Activated CD4-positive, alpha-beta memory T cell treated with anti-CD3 and anti-CD28 coated beads for 36 hours (primary cell): ENCODE measurements at regions of chr1 and their contacts with region 1.

Region 1: GRCh38 chr1:226626577-226626956 is 78.0 kb downstream of the STUM start:
- DNase-seq: peak; percentile 92
- H3K4me3 Mint-ChIP-seq: peak overlapping the region; percentile 38
- H3K27ac Mint-ChIP-seq: peak overlapping the region; percentile 76
- H3K4me1 Mint-ChIP-seq: peaks cover 25% of the 10 kb centered on the region
- H3K27me3 Mint-ChIP-seq: peaks cover 1% of the 10 kb centered on the region

Region 2: DNA sequence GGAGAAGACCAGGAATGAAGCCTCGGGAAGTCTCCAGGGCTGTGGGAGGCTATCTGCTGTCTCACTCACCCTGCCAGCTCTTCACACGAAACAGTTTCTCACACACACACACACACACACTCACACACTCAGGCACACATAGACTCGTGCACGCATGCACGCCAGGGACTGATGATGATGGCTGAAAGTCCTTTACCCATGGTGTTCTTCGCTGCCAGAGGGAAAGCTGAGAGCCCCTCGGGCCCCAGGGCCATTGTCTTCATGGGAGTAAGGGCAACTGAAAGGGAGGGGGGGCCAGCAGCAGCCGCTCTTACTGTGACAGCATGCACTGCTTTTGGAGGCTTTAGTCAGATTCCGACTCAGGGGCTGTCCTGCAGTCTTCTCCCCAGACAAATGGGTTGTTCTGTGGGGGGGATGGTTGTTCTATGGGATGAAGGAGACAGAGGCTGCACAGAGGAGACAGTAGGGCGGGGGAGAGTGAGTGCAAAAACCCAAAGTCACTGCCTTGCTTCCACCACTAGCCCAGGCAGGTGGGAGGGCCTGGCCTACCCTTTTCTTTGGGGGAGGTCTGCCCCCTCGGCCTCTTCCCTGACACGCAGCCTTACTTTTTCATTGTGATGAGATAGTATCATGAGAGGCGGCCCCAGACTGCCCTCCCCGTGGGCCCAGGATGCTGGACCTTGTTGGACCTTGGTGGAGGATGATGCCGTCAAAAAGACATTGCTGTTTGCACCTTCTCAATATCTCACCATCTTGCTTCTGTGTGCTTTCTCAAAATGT is 49.0 kb before region 1 on chr1:
- CTCF ChIA-PET with region 1: no interaction called
- POLR2A ChIA-PET with region 1: no interaction called
- intact Hi-C with region 1: no loop called
- DNase-seq: no peak
- H3K4me3 Mint-ChIP-seq: no peak overlapping the region
- H3K27ac Mint-ChIP-seq: no peak overlapping the region
- H3K4me1 Mint-ChIP-seq: no peaks in the 10 kb centered on the region
- H3K27me3 Mint-ChIP-seq: no peaks in the 10 kb centered on the region

Region 3: DNA sequence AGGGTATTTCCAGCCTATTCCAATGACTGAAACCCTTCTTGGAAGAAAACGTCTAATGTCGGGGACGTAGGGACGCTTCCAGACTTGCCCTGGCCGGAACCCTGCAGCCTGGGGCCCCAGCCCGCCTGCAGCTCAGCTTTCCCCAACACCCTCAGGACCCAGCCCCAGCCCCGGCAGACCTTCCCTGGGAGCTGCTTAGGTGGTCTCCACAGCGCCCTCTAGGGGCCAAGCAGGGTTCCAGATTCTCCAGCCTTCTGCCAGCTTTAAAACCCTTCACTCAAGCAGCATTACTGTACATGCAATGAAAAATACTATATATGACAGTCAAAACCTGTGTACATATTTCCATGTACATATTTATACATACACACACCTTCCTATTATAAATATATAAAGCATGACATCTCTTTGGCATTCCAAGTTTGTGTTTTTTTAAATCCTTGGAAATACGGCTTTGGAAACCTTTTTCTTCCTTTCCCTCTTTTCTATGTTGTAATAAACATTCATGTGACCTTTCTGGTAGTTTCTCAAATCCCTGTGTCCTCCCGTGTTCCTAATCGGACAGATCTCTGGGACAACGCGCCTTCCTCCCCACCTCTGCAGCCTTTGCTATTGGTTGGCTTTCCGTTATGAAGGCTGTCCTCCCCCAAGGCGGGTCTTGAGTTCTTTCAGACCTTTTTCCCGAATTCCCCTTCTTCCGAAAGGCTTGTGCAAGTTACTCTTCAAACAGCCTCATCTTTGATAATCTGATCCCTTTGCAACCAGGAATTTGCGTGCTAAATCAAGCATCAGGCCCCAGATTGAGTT is 17.7 kb before region 1 on chr1:
- CTCF ChIA-PET with region 1: interaction called, 13 read pairs
- POLR2A ChIA-PET with region 1: no interaction called
- intact Hi-C with region 1: no loop called
- DNase-seq: peak; percentile 78
- H3K4me3 Mint-ChIP-seq: no peak overlapping the region
- H3K27ac Mint-ChIP-seq: no peak overlapping the region
- H3K4me1 Mint-ChIP-seq: no peaks in the 10 kb centered on the region
- H3K27me3 Mint-ChIP-seq: no peaks in the 10 kb centered on the region

Region 4: DNA sequence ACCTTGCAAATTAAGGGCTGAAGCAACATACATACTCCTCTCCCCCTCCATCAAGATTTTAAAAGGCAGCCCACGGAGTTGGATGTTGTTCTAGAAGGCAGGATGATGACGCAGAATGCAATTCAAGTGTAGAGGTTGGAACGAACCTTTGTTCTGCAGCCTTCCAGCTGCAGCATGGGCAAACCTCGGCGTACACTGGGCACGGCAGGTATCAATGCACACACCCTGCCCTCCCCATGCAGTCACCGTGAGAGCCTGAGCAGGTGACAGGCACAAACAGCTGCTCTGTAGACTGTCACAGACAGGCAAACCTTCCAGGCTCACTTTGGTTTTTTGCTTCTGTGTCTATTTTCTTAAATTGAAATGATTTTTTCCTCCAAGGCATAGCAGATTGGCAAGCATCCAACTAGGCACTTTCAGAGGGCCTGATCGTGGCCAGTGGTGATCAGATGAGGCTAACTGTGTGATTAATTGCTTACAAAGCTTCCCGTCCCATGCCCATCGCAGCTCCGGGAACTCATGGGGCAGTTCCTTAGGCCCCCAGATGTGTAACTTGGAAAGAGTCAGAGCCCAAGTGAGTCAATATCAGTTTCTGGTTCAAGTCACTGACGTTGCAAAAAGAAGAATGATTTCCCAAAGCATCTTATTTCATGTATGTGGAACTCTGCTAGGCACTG is 30.2 kb after region 1 on chr1:
- CTCF ChIA-PET with region 1: interaction called, 13 read pairs
- POLR2A ChIA-PET with region 1: no interaction called
- intact Hi-C with region 1: no loop called
- DNase-seq: no peak
- H3K4me3 Mint-ChIP-seq: peak overlapping the region; percentile 43
- H3K27ac Mint-ChIP-seq: no peak overlapping the region
- H3K4me1 Mint-ChIP-seq: peaks cover 29% of the 10 kb centered on the region
- H3K27me3 Mint-ChIP-seq: no peaks in the 10 kb centered on the region

Region 5: GRCh38 chr1:226827968-226828513 is 201.5 kb after region 1 on chr1:
- CTCF ChIA-PET with region 1: interaction called, 73 read pairs
- POLR2A ChIA-PET with region 1: interaction called, 3 read pairs
- intact Hi-C with region 1: loop called (anchors 1 kb)
- DNase-seq: peak; percentile 98
- H3K4me3 Mint-ChIP-seq: peak overlapping the region; percentile 52
- H3K27ac Mint-ChIP-seq: peak overlapping the region; percentile 88
- H3K4me1 Mint-ChIP-seq: peaks cover 28% of the 10 kb centered on the region
- H3K27me3 Mint-ChIP-seq: no peaks in the 10 kb centered on the region

Region 6: DNA sequence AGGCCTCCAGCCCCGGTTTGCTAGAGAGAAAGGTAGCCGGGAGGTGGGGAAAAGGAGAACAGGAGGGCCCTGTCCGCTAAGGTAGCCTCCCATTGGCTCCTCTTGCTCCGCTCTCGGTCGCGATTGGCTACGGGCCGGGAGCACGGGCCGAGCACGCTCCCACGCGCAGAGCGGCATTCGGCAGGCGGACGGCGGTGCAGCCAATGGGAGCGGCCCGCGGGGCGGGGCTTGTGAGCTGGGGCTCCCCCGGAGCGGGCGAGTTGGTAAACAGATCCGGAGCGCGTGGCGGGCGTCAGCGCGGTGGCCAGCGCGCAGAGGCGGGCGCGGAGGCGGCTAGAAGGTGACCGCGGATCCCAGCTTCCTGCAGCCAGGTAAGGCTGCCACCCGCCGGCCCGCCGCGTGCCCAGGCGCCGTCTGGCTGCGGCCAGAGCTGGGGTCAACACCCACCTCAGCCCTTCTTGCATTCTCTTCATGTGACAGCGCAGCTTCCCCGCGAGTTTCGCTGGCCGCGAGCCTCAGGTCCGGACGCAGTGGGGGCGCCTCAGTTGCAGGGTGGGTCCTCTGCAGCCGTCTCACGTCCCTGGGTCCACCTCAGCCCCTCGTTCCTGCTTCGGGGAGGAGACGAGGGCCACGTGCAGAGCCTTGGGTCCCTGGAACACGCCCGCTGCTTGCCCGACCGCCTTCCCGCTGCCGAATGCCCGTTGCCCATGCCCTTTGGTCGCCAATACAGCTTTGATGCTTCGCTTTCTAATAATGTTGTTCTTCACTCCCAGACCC is 313.6 kb after region 1 on chr1 and contains the start of gene COQ8A:
- CTCF ChIA-PET with region 1: interaction called, 6 read pairs
- POLR2A ChIA-PET with region 1: no interaction called
- intact Hi-C with region 1: loop called (anchors 2 kb)
- DNase-seq: peak; percentile 99
- H3K4me3 Mint-ChIP-seq: peak within 1 kb of the TSS; percentile 82
- H3K27ac Mint-ChIP-seq: peak within 1 kb of the TSS; percentile 94
- H3K4me1 Mint-ChIP-seq: peaks cover 41% of the 10 kb centered on the region
- H3K27me3 Mint-ChIP-seq: no peaks in the 10 kb centered on the region
- total RNA-seq, gene COQ8A: 19.8 to 22.2 TPM

Region 7: DNA sequence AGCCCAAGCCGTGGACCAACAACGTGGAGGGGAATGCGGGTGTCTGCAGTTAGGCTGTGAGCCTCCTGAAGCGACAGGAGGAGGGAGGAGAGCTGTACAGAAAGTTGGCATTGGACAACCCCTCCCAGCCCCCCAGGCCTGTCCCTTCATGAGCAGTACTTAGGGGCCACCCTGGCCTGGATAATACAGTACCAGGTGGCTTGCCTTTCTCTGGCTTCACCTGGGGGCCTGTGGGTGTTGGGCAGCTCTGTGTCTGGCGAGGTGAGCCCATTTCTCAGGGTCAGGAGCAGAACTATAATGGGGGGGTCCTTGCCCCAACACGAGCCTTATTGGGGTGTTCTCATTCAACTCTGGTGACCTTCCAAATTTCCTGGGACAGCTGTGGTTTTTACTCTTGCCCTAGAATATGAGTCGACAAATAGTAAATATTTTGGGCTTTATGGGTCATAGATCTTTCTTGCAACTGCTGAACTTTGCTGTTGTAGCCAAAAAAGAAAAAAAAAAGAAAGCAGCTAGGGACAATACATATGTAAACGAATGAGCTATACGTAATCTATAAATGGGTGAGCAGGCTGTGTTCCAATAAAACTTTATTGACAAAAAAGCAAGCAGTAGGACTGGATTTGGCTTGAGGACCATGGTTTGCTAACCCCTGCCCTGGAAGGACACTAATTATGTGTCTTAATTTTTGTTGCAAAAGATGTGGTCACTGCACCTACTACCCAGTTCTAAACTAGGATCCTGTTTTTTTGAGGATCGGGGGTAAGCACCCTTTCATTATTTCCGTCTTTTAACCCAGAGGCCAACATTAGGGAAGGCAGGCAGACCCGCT is 324.9 kb after region 1 on chr1:
- CTCF ChIA-PET with region 1: no interaction called
- POLR2A ChIA-PET with region 1: no interaction called
- intact Hi-C with region 1: no loop called
- DNase-seq: no peak
- H3K4me3 Mint-ChIP-seq: no peak overlapping the region
- H3K27ac Mint-ChIP-seq: no peak overlapping the region
- H3K4me1 Mint-ChIP-seq: peaks cover 4% of the 10 kb centered on the region
- H3K27me3 Mint-ChIP-seq: no peaks in the 10 kb centered on the region